IMR-90 (cell line): ENCODE measurements at regions of chr12 and their contacts with region 1.

Region 1: DNA sequence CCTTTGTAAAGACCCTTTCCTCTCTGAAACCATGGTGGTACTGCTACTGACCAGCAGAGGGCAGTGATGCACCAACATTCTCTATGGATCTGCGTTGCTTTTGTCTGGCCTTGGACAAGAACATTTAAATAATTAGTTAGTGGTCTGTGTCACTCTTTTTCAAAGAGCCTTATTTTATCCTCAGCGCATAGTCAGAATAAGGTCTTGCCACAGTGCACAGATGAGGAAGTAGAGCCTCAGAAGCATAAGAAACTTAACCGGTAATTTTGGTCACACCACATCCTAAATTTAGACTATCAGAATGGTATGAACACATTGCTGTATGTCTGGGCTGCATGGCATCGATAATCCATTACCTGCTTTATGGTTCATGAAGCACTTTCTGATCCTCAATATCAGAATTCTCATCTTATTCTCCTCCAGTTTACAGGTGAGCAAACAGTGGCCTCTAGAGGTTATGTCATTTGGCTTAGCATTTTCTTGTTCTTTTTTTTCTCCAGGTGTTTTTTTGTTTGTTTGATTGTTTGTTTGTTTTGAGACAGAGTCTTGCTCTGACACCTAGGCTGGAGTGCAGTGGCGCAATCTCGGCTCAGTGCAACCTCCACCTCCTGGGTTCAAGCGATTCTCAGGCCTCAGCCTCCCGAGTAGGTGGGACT is 23.7 kb upstream of the IFT81 start:
- DNase-seq: peak; percentile 78
- ATAC-seq: peak; percentile 92
- H3K4me3 ChIP-seq: no peak overlapping the region
- H3K27ac ChIP-seq: no peak overlapping the region
- H3K4me1 ChIP-seq: peaks cover 7% of the 10 kb centered on the region
- H3K27me3 ChIP-seq: no peaks in the 10 kb centered on the region
- CTCF ChIP-seq: peak; percentile 95
- POLR2A ChIP-seq: no peak
- RAD21 ChIP-seq: peak; percentile 98

Region 2: DNA sequence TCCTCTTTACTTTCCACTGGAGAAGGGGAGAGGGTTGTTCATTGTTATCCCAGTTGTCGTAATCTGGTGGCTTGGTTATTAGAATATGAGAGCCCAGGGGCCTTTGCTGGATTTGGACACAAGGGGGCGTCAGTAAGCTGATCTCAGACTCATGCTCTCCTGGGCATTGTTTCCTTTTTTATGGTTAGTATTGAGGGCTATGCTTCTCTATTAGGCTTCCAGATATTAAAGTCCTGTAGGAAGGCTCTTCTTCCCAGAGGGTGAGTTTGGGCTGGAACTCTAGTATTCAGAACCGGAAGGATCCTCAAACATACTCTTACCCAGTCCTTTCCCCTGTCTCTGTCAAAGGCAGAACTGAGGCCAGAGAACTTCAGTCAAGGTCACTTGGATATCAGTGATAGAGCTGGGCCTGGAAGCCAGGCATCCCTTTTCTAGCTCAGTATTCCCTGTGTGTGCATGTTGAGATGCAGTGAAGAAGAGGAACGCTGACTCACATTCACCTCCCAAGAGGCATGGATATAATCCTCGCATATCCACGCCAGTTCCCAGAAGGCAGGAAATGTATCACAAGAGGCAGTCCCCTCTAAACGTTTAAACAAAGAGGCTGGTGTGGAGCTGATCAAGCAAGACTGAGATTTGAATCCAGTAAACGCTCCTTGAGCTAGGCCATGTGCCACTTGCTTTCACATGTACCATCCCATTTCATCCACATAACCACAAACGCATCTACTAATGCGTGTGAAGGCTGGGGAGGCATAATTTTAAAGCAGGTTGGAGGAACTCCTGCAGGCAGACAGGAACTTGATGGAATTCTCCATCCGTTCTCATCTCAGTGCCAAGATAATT is 581.4 kb before region 1 on chr12:
- CTCF ChIA-PET with region 1: no interaction called
- POLR2A ChIA-PET with region 1: no interaction called
- dilution Hi-C with region 1: no loop called
- in situ Hi-C with region 1: no loop called
- intact Hi-C with region 1: no loop called
- DNase-seq: peak; percentile 92
- ATAC-seq: peak; percentile 91
- H3K4me3 ChIP-seq: no peak overlapping the region
- H3K27ac ChIP-seq: peak overlapping the region; percentile 67
- H3K4me1 ChIP-seq: peaks cover 7% of the 10 kb centered on the region
- H3K27me3 ChIP-seq: no peaks in the 10 kb centered on the region
- CTCF ChIP-seq: peak; percentile 84
- POLR2A ChIP-seq: no peak
- RAD21 ChIP-seq: peak; percentile 82

Region 3: GRCh38 chr12:110012137-110012536 is 88.3 kb before region 1 on chr12:
- CTCF ChIA-PET with region 1: no interaction called
- POLR2A ChIA-PET with region 1: no interaction called
- dilution Hi-C with region 1: no loop called
- in situ Hi-C with region 1: no loop called
- intact Hi-C with region 1: no loop called
- DNase-seq: no peak
- ATAC-seq: no peak
- H3K4me3 ChIP-seq: no peak overlapping the region
- H3K27ac ChIP-seq: no peak overlapping the region
- H3K4me1 ChIP-seq: peaks cover 8% of the 10 kb centered on the region
- H3K27me3 ChIP-seq: no peaks in the 10 kb centered on the region
- CTCF ChIP-seq: no peak
- POLR2A ChIP-seq: no peak
- RAD21 ChIP-seq: no peak

Region 4: GRCh38 chr12:110224379-110225304 is 124.2 kb after region 1 on chr12:
- CTCF ChIA-PET with region 1: interaction called, 4 read pairs
- POLR2A ChIA-PET with region 1: no interaction called
- dilution Hi-C with region 1: no loop called
- in situ Hi-C with region 1: no loop called
- intact Hi-C with region 1: loop called (anchors 1 kb)
- DNase-seq: peak; percentile 89
- ATAC-seq: peak; percentile 90
- H3K4me3 ChIP-seq: peak overlapping the region; percentile 25; the same call in 1 of the 2 replicates
- H3K27ac ChIP-seq: peak overlapping the region; percentile 73; the same call in 1 of the 2 replicates
- H3K4me1 ChIP-seq: peaks cover 5% of the 10 kb centered on the region; the same call in 1 of the 2 replicates
- H3K27me3 ChIP-seq: no peaks in the 10 kb centered on the region
- CTCF ChIP-seq: peak; percentile 77
- POLR2A ChIP-seq: no peak
- RAD21 ChIP-seq: peak; percentile 72

Region 5: GRCh38 chr12:110280779-110281548 is 180.5 kb after region 1 on chr12 and contains the start of gene ATP2A2:
- CTCF ChIA-PET with region 1: no interaction called
- POLR2A ChIA-PET with region 1: no interaction called
- dilution Hi-C with region 1: no loop called
- in situ Hi-C with region 1: no loop called
- intact Hi-C with region 1: loop called (anchors 2 kb)
- DNase-seq: peak; percentile 85
- ATAC-seq: peak; percentile 88
- H3K4me3 ChIP-seq: peak within 1 kb of the TSS; percentile 93
- H3K27ac ChIP-seq: peak within 1 kb of the TSS; percentile 98
- H3K4me1 ChIP-seq: peaks cover 8% of the 10 kb centered on the region
- H3K27me3 ChIP-seq: no peaks in the 10 kb centered on the region
- CTCF ChIP-seq: no peak
- POLR2A ChIP-seq: peak; percentile 96
- RAD21 ChIP-seq: no peak
- total RNA-seq, gene ATP2A2: 225 and 230 TPM in 2 replicates

Region 6: GRCh38 chr12:110312581-110313360 is 212.3 kb after region 1 on chr12:
- CTCF ChIA-PET with region 1: no interaction called
- POLR2A ChIA-PET with region 1: no interaction called
- dilution Hi-C with region 1: no loop called
- in situ Hi-C with region 1: no loop called
- intact Hi-C with region 1: loop called (anchors 10 kb)
- DNase-seq: peak; percentile 72
- ATAC-seq: 0 out of 2 replicates have a peak, but pooled peaks have one; percentile 18
- H3K4me3 ChIP-seq: no peak overlapping the region
- H3K27ac ChIP-seq: peak overlapping the region; percentile 92
- H3K4me1 ChIP-seq: peaks cover 23% of the 10 kb centered on the region
- H3K27me3 ChIP-seq: no peaks in the 10 kb centered on the region
- CTCF ChIP-seq: no peak
- POLR2A ChIP-seq: no peak
- RAD21 ChIP-seq: no peak

Region 7: GRCh38 chr12:110338754-110339153 is 238.3 kb after region 1 on chr12:
- CTCF ChIA-PET with region 1: no interaction called
- POLR2A ChIA-PET with region 1: no interaction called
- dilution Hi-C with region 1: no loop called
- in situ Hi-C with region 1: no loop called
- intact Hi-C with region 1: loop called (anchors 2 kb)
- DNase-seq: no peak
- ATAC-seq: no peak
- H3K4me3 ChIP-seq: no peak overlapping the region
- H3K27ac ChIP-seq: no peak overlapping the region
- H3K4me1 ChIP-seq: no peaks in the 10 kb centered on the region
- H3K27me3 ChIP-seq: no peaks in the 10 kb centered on the region
- CTCF ChIP-seq: 0 out of 2 replicates have a peak, but pooled peaks have one; percentile 9
- POLR2A ChIP-seq: no peak
- RAD21 ChIP-seq: peak; percentile 21; the same call in 1 of the 2 replicates

Region 8: DNA sequence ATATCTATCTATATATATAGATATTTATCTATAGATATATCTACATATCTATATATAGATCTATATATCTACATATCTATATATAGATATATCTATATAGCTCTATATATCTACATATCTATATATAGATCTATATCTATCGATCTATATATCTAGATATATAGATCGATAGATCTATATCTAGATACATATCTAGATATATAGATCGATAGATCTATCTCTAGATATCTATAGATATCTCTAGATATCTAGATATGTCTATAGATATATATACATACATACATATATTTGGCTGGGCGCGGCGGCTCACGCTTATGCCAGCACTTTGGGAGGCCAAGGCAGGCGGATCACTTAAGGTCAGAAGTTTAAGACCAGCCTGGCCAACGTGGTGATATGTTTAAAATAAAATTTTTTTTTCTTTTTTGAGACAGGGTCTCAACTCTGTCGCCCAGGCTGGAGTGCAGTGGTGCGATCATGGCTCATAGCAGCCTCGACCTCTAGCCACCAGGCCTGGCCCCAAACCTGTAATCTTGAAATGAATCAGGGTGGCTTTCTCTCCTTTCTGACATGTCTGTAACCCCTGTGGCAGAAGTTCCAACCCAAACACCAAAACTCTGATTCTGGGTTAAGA is 331.6 kb after region 1 on chr12:
- CTCF ChIA-PET with region 1: interaction called, 12 read pairs
- POLR2A ChIA-PET with region 1: interaction called, 17 read pairs
- dilution Hi-C with region 1: no loop called
- in situ Hi-C with region 1: no loop called
- intact Hi-C with region 1: loop called (anchors 1 kb)
- DNase-seq: no peak
- ATAC-seq: no peak
- H3K4me3 ChIP-seq: no peak overlapping the region
- H3K27ac ChIP-seq: no peak overlapping the region
- H3K4me1 ChIP-seq: 0 out of 2 replicates have a peak, but pooled peaks cover 2% of the 10 kb centered on the region
- H3K27me3 ChIP-seq: no peaks in the 10 kb centered on the region
- CTCF ChIP-seq: no peak
- POLR2A ChIP-seq: no peak
- RAD21 ChIP-seq: no peak